Activated naive CD4-positive, alpha-beta T cell treated with anti-CD3 and anti-CD28 coated beads for 36 hours (primary cell): ENCODE measurements at regions of chr7 and their contacts with region 1.

Region 1: GRCh38 chr7:50632561-50633413 is 67.6 kb upstream of the DDC start:
- DNase-seq: peak; percentile 70
- H3K4me3 Mint-ChIP-seq: no peak overlapping the region
- H3K27ac Mint-ChIP-seq: no peak overlapping the region
- H3K4me1 Mint-ChIP-seq: no peaks in the 10 kb centered on the region
- H3K27me3 Mint-ChIP-seq: peaks cover 2% of the 10 kb centered on the region

Region 2: DNA sequence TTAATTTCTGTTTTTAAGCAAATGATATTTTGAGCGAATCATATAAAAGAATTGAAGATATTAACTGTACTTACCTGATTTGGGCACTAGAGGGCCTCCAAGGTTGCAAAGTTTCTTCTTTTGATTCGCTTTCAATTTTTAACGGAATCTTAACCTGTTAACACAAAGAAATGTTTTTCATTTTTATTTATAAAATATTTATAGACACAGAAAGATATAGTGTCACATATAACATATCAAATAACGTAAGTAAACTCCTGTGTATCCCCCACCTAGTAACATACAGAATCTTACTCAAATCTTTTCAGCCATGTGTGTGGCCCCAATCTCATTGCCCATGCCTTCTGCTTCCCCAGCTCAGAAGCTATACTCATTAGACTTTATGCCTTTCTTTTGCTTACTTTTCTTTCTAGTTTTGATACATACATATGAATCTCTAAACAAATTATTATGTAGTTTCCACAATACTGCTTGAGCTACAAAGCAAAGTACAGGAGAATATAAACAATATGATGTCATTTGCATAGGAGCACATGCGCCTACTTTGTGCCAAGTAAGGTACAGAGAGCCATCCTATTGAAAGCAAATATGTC is 490.3 kb before region 1 on chr7:
- CTCF ChIA-PET with region 1: no interaction called
- intact Hi-C with region 1: loop called (anchors 5 kb)
- DNase-seq: peak; percentile 64
- H3K4me3 Mint-ChIP-seq: peak overlapping the region; percentile 45
- H3K27ac Mint-ChIP-seq: peak overlapping the region; percentile 82
- H3K4me1 Mint-ChIP-seq: peaks cover 43% of the 10 kb centered on the region
- H3K27me3 Mint-ChIP-seq: no peaks in the 10 kb centered on the region

Region 3: GRCh38 chr7:50610521-50611277 is 22.1 kb before region 1 on chr7:
- CTCF ChIA-PET with region 1: interaction called, 73 read pairs
- intact Hi-C with region 1: no loop called
- DNase-seq: peak; percentile 80
- H3K4me3 Mint-ChIP-seq: no peak overlapping the region
- H3K27ac Mint-ChIP-seq: no peak overlapping the region
- H3K4me1 Mint-ChIP-seq: peaks cover 26% of the 10 kb centered on the region
- H3K27me3 Mint-ChIP-seq: no peaks in the 10 kb centered on the region

Region 4: GRCh38 chr7:50653126-50653864 is 20.5 kb after region 1 on chr7:
- CTCF ChIA-PET with region 1: interaction called, 10 read pairs
- intact Hi-C with region 1: no loop called
- DNase-seq: no peak
- H3K4me3 Mint-ChIP-seq: no peak overlapping the region
- H3K27ac Mint-ChIP-seq: no peak overlapping the region
- H3K4me1 Mint-ChIP-seq: no peaks in the 10 kb centered on the region
- H3K27me3 Mint-ChIP-seq: no peaks in the 10 kb centered on the region

Region 5: DNA sequence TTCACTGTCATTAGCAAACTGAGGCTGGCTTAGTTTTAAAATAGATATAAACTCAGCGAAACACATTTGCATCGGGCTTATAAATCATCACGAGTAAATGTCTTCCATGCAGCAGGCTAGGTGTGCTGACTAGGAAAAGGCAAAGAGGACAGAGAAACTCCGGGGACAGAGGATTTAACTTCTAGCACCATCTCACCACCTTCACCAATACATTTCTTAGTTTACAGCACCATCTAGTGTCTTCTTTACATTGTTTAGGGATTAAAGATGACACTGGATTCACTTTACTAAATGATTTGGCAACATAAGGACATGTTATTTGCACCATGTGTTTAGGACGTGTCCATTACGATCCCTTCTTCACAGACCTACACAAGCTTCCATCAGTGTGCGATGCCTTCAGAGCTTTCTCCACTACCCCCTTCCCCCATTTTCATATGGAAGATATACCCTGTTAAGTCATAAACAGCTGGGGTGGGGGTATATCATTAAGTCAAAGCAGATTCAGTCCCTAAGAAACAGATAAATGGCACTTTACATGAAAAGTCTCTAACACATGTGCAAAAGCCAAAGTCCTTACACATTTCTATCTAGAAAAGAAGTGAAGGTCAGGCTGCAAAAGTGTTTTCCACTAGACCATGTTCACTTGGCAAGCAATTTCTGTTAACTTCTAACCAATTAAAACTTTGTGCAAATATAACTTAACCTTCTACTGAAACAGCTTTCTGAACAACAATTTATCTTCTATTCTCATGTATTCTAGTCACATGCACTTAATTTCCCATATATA is 46.6 kb after region 1 on chr7:
- CTCF ChIA-PET with region 1: interaction called, 5 read pairs
- intact Hi-C with region 1: loop called (anchors 1 kb)
- DNase-seq: no peak
- H3K4me3 Mint-ChIP-seq: no peak overlapping the region
- H3K27ac Mint-ChIP-seq: no peak overlapping the region
- H3K4me1 Mint-ChIP-seq: no peaks in the 10 kb centered on the region
- H3K27me3 Mint-ChIP-seq: no peaks in the 10 kb centered on the region

Region 6: GRCh38 chr7:51067757-51068156 is 435.0 kb after region 1 on chr7:
- CTCF ChIA-PET with region 1: no interaction called
- intact Hi-C with region 1: loop called (anchors 5 kb)
- DNase-seq: peak; percentile 75
- H3K4me3 Mint-ChIP-seq: no peak overlapping the region
- H3K27ac Mint-ChIP-seq: no peak overlapping the region
- H3K4me1 Mint-ChIP-seq: no peaks in the 10 kb centered on the region
- H3K27me3 Mint-ChIP-seq: no peaks in the 10 kb centered on the region

Region 7: GRCh38 chr7:51275532-51275931 is 642.7 kb after region 1 on chr7:
- CTCF ChIA-PET with region 1: no interaction called
- intact Hi-C with region 1: no loop called
- DNase-seq: no peak
- H3K4me3 Mint-ChIP-seq: no peak overlapping the region
- H3K27ac Mint-ChIP-seq: no peak overlapping the region
- H3K4me1 Mint-ChIP-seq: no peaks in the 10 kb centered on the region
- H3K27me3 Mint-ChIP-seq: peaks cover 4% of the 10 kb centered on the region